Posterior cingulate gyrus (tissue), 11 donors: ENCODE measurements at regions of chr21 and their contacts with region 1.

Region 1: GRCh38 chr21:42496122-42496900 is at the start of gene RSPH1:
- DNase-seq: peak; percentile 100

Region 2: GRCh38 chr21:42530167-42530518 is 33.8 kb after region 1 on chr21:
- intact Hi-C with region 1: loop called (anchors 1 kb)
- DNase-seq: peak in 7 of 10 donors; percentile 48 to 94 (median 69)

Region 3: DNA sequence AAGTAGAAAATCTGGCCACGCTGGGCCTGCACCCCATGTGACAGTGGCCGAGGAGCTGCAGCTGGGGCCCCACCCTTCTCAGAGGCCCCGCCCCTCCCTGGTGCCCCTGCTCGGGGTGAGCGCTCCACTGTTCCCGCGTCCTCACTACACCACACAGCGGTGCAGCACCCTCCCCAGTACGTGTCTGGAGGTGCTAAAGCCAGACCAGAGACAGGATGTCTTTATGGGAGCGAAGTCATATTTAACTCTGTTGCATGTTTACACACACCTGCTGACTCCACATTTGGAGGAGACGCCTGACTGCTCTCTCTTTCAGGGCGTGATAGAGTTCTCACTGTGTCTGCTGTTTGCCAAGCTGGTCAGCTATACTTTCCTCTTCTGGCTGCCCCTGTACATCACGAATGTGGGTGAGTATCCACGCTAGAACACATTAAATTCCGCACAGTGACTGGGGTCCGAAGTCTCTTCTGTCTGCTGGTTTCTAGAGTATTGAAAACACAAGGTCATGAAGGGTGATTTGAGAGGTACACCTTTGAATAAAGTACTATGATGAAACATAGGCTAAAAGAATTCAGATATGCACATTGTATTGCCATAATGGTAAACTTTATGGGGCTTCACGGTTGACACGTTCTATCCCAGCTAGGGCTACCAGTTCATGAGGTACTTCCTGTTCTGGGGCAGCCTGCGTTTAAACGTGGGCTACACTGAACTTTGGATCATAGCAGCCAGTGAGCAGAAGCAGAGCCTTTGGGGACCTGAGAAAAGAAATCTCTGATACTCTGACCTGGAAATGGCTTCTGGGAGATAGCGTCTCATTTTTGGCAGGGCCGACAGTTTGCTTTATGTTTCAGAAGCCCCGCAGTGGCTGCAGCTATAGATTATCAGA is 65.7 kb after region 1 on chr21:
- intact Hi-C with region 1: no loop called
- DNase-seq: peak in 3 of 10 donors; percentile 34 to 54 (median 46)